Naive thymus-derived CD8-positive, alpha-beta T cell (primary cell): ENCODE measurements at regions of chrX and their contacts with region 1.

Region 1: DNA sequence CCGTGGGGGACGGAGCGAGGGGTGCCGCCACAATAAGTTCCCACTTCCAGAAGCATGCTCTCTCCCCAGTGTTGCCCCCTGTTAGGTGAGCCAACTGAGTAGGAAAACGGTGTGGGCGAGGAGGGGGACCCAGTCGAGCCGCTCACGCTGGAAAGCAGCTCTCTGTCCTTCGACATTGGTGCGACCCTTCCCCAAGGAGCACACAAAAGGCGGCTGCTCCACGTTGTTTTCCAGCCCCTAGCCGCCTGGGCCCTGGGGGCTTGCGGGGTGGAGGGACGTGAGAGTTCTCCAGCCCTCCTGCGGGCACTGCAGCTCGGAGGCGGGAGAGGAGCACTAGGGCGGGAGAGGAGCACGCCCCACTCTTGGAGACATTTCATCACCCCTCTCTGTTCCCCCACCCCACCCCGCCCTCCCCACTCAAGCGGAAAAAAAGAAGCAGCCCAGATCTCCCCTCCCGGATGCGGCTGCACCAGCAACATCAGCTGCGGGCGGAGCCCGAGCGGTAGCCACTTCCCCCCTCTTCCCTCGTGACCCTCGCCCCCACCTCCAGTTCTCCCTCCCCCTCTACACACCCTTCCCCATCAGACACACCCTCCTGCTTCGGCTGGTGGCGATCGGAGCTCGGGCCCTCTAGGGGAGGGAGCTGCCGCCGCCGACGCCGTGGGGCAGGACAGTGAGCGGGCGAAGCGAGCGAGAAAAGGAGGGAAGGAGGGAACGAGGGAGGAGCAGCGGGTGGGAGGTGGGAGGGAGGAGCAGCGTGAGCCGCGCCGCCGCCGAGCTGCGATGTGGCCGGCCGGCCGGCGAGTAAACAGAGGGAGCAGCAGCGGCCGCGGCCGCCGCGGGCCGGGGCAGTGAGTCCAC is at the start of gene DOCK11:
- DNase-seq: peak; percentile 61 to 89 (median 74)
- ATAC-seq: peak; percentile 69 to 71
- H3K4me3 Mint-ChIP-seq: peak within 1 kb of the TSS; percentile 96 to 100 (median 98)
- H3K27ac Mint-ChIP-seq: peak within 1 kb of the TSS; percentile 93 to 99 (median 98)
- H3K4me1 Mint-ChIP-seq: peaks cover 10 to 34% (median 28%) of the 10 kb centered on the region in 4 donors
- H3K27me3 Mint-ChIP-seq: no peaks in the 10 kb centered on the region
- polyA plus RNA-seq, gene DOCK11: 20.9 to 26.6 (median 24.1) TPM

Region 2: GRCh38 chrX:118392716-118393115 is 102.6 kb before region 1 on chrX:
- POLR2A ChIA-PET with region 1: no interaction called
- DNase-seq: no peak
- ATAC-seq: no peak
- H3K4me3 Mint-ChIP-seq: no peak overlapping the region
- H3K27ac Mint-ChIP-seq: no peak overlapping the region
- H3K4me1 Mint-ChIP-seq: peaks cover 0 to 6% (median under 1%) of the 10 kb centered on the region in 4 donors
- H3K27me3 Mint-ChIP-seq: no peaks in the 10 kb centered on the region

Region 3: GRCh38 chrX:118459494-118459893 is 35.8 kb before region 1 on chrX:
- POLR2A ChIA-PET with region 1: no interaction called
- DNase-seq: peak in 7 of 10 donors; percentile 6 to 62 (median 25)
- ATAC-seq: peak; percentile 69
- H3K4me3 Mint-ChIP-seq: no peak overlapping the region
- H3K27ac Mint-ChIP-seq: peak overlapping the region in 1 of 10 donors; percentile 52
- H3K4me1 Mint-ChIP-seq: peaks cover 0 to 6% (median 3%) of the 10 kb centered on the region in 4 donors
- H3K27me3 Mint-ChIP-seq: no peaks in the 10 kb centered on the region

Region 4: GRCh38 chrX:118508635-118509034 is 13.3 kb after region 1 on chrX:
- POLR2A ChIA-PET with region 1: interaction called, 17 read pairs
- DNase-seq: no peak
- ATAC-seq: no peak
- H3K4me3 Mint-ChIP-seq: peak overlapping the region in 5 of 10 donors; percentile 15 to 41 (median 38)
- H3K27ac Mint-ChIP-seq: peak overlapping the region; percentile 48 to 79 (median 64)
- H3K4me1 Mint-ChIP-seq: peaks cover 24 to 93% (median 80%) of the 10 kb centered on the region in 4 donors
- H3K27me3 Mint-ChIP-seq: no peaks in the 10 kb centered on the region

Region 5: GRCh38 chrX:118520216-118521206 is 25.2 kb after region 1 on chrX:
- POLR2A ChIA-PET with region 1: interaction called, 14 read pairs
- DNase-seq: no peak
- ATAC-seq: no peak
- H3K4me3 Mint-ChIP-seq: peak overlapping the region in 7 of 10 donors; percentile 2 to 51 (median 39)
- H3K27ac Mint-ChIP-seq: peak overlapping the region; percentile 31 to 95 (median 83)
- H3K4me1 Mint-ChIP-seq: peaks cover 14 to 70% (median 62%) of the 10 kb centered on the region in 4 donors
- H3K27me3 Mint-ChIP-seq: no peaks in the 10 kb centered on the region

Region 6: DNA sequence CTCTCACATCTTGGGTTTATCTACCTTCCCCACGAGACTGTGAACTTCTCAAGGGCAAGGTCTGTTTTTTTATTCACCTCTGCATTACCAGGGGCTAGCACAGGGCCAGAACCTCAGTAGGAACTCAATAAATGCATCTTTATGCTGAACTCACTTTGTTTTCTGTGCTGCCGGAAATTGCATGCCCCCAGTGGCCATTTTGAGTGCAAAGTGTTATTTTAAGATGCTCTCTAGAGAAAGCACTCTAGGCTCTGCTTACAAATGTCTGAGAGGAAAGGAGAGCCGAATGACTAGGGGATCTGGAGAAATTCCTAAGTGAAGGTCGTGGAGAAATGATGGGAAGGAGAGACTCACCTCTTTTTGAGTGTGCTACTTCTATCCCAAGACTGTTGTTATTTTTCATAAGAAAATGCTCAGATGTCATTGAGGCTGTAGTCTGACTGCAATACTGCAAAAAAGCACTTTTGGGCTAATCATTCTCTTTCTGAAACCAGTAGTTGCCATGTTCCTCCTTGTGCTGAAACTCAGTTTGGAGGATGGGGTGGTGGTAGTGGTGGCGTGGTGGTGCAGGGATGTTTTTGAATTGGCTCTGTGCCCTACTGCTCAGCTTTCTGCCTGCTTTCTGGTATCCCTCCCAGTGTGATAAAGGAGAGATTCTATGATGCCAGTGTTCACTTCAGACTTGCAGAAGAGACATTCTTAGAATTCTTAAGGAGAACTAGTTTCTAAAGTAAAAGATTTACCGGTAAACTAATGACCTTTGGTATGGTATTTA is 41.6 kb after region 1 on chrX:
- POLR2A ChIA-PET with region 1: interaction called, 121 read pairs
- DNase-seq: peak in 9 of 10 donors; percentile 16 to 60 (median 35)
- ATAC-seq: peak; percentile 84 to 88
- H3K4me3 Mint-ChIP-seq: peak overlapping the region; percentile 27 to 84 (median 69)
- H3K27ac Mint-ChIP-seq: peak overlapping the region; percentile 56 to 94 (median 84)
- H3K4me1 Mint-ChIP-seq: peaks cover 22 to 84% (median 62%) of the 10 kb centered on the region in 4 donors
- H3K27me3 Mint-ChIP-seq: no peaks in the 10 kb centered on the region